ENCODE measurements at regions of chr1 and their contacts with region 1.

Region 1: GRCh38 chr1:26889551-26890466 is at the start of gene GPN2:
- DNase-seq: peak; percentile 52 to 87 (median 71)
- ATAC-seq: peak; percentile 93 to 98 (median 96)
- H3K4me3 ChIP-seq: peak within 1 kb of the TSS; percentile 80 to 93
- H3K4me3 Mint-ChIP-seq: peak within 1 kb of the TSS; percentile 88 to 96 (median 95)
- H3K27ac ChIP-seq: peak within 1 kb of the TSS; percentile 89
- H3K27ac Mint-ChIP-seq: peak within 1 kb of the TSS; percentile 93
- H3K4me1 ChIP-seq: peaks cover 7 to 28% of the 10 kb centered on the region in 2 experiments
- H3K4me1 Mint-ChIP-seq: peaks cover 32 to 39% (median 36%) of the 10 kb centered on the region in 3 donors
- H3K27me3 ChIP-seq: no peaks in the 10 kb centered on the region
- H3K27me3 Mint-ChIP-seq: no peaks in the 10 kb centered on the region
- total RNA-seq, gene GPN2: 30.8 to 35.7 (median 32.7) TPM

Region 2: GRCh38 chr1:26608895-26609294 is 280.9 kb before region 1 on chr1:
- CTCF ChIA-PET with region 1: interaction called in 1 of 2 experiments, 9 read pairs
- POLR2A ChIA-PET with region 1: interaction called in 1 of 2 experiments, 11 read pairs
- DNase-seq: no peak
- ATAC-seq: no peak
- H3K4me3 ChIP-seq: no peak overlapping the region
- H3K4me3 Mint-ChIP-seq: no peak overlapping the region
- H3K27ac ChIP-seq: no peak overlapping the region
- H3K27ac Mint-ChIP-seq: no peak overlapping the region
- H3K4me1 ChIP-seq: no peaks in the 10 kb centered on the region
- H3K4me1 Mint-ChIP-seq: no peaks in the 10 kb centered on the region
- H3K27me3 ChIP-seq: peaks cover 0 to 7% of the 10 kb centered on the region in 2 experiments
- H3K27me3 Mint-ChIP-seq: no peaks in the 10 kb centered on the region

Region 3: GRCh38 chr1:26666855-26667254 is 223.0 kb before region 1 on chr1:
- CTCF ChIA-PET with region 1: no interaction called
- POLR2A ChIA-PET with region 1: no interaction called
- DNase-seq: no peak
- ATAC-seq: no peak
- H3K4me3 ChIP-seq: no peak overlapping the region
- H3K4me3 Mint-ChIP-seq: no peak overlapping the region
- H3K27ac ChIP-seq: no peak overlapping the region
- H3K27ac Mint-ChIP-seq: no peak overlapping the region
- H3K4me1 ChIP-seq: no peaks in the 10 kb centered on the region
- H3K4me1 Mint-ChIP-seq: no peaks in the 10 kb centered on the region
- H3K27me3 ChIP-seq: no peaks in the 10 kb centered on the region
- H3K27me3 Mint-ChIP-seq: no peaks in the 10 kb centered on the region

Region 4: GRCh38 chr1:26705788-26706311 is 184.0 kb before region 1 on chr1:
- CTCF ChIA-PET with region 1: no interaction called
- POLR2A ChIA-PET with region 1: interaction called in 1 of 2 experiments, 12 read pairs
- DNase-seq: no peak
- ATAC-seq: no peak
- H3K4me3 ChIP-seq: peak overlapping the region in 1 of 2 donors; percentile 11
- H3K4me3 Mint-ChIP-seq: peak overlapping the region; percentile 45 to 64 (median 45)
- H3K27ac ChIP-seq: peak overlapping the region; percentile 10
- H3K27ac Mint-ChIP-seq: peak overlapping the region; percentile 41 to 73
- H3K4me1 ChIP-seq: peaks cover 57 to 70% of the 10 kb centered on the region in 2 experiments
- H3K4me1 Mint-ChIP-seq: peaks cover 20 to 47% (median 45%) of the 10 kb centered on the region in 3 donors
- H3K27me3 ChIP-seq: no peaks in the 10 kb centered on the region
- H3K27me3 Mint-ChIP-seq: no peaks in the 10 kb centered on the region

Region 5: GRCh38 chr1:26754086-26754874 is 135.5 kb before region 1 on chr1:
- CTCF ChIA-PET with region 1: no interaction called
- POLR2A ChIA-PET with region 1: interaction called in 1 of 2 experiments, 17 read pairs
- DNase-seq: no peak
- ATAC-seq: no peak
- H3K4me3 ChIP-seq: no peak overlapping the region
- H3K4me3 Mint-ChIP-seq: no peak overlapping the region
- H3K27ac ChIP-seq: no peak overlapping the region
- H3K27ac Mint-ChIP-seq: peak overlapping the region; percentile 34 to 43
- H3K4me1 ChIP-seq: peaks cover 5 to 37% of the 10 kb centered on the region in 2 experiments
- H3K4me1 Mint-ChIP-seq: peaks cover 53 to 70% (median 67%) of the 10 kb centered on the region in 3 donors
- H3K27me3 ChIP-seq: no peaks in the 10 kb centered on the region
- H3K27me3 Mint-ChIP-seq: no peaks in the 10 kb centered on the region

Region 6: DNA sequence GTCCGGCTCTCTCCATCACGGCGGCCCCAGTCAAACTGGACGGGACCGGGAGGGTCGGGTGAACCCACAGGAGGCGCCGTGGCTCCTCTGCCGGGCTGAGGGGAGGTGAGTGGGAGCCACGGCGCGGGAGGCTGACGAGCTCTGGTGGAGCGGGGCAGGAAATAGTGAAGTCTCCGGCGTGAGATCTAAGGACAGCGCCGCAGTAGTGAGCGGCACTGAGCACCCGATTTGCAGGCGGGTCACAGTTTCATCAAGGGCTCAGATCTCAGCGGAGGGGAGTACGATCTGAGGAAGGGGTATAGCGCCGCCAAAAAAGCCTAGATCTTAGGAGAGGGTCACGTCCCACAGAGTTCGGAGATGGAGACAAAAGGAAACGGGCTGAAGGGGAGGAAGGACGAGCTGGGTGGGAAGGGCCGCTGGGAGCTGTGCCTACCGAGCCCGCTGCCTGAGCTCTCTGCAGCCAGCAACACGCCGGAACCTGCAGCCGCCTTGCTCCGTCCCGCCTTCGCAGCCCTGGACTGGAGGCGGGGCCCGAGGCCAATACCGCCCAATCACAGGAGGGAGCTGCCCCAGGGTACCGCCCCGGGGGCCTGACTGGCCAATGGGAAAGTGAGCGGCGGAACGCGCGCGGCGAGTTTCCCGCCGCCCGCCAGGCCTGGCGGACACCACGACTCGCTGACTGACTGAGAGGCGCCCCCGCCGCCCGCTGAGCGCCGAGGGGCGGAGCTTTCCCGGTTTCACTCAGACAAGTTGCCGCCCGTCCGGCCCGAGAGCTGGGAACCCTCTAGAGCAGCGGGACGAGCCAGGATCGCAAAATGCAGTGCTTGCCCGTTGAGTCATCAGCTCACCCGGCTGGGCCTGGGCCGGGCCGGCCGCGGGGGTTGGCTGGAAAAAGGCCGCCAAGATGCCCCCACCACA is 24.9 kb before region 1 on chr1:
- CTCF ChIA-PET with region 1: interaction called, 5 to 13 read pairs
- POLR2A ChIA-PET with region 1: no interaction called
- DNase-seq: peak; percentile 82 to 96 (median 90)
- ATAC-seq: peak; percentile 94 to 96 (median 94)
- H3K4me3 ChIP-seq: peak overlapping the region; percentile 92 to 99
- H3K4me3 Mint-ChIP-seq: peak overlapping the region; percentile 87 to 95 (median 88)
- H3K27ac ChIP-seq: peak overlapping the region; percentile 72
- H3K27ac Mint-ChIP-seq: peak overlapping the region; percentile 88 to 93
- H3K4me1 ChIP-seq: peaks cover 3 to 32% of the 10 kb centered on the region in 2 experiments
- H3K4me1 Mint-ChIP-seq: peaks cover 17 to 31% (median 23%) of the 10 kb centered on the region in 3 donors
- H3K27me3 ChIP-seq: peaks cover 0 to 2% of the 10 kb centered on the region in 2 experiments
- H3K27me3 Mint-ChIP-seq: no peaks in the 10 kb centered on the region

Region 7: GRCh38 chr1:26900001-26900814 is 10.4 kb after region 1 on chr1 and contains the start of gene GPATCH3:
- CTCF ChIA-PET with region 1: interaction called in 1 of 2 experiments, 11 read pairs
- POLR2A ChIA-PET with region 1: interaction called, 8 to 13 read pairs
- DNase-seq: peak; percentile 71 to 94 (median 83)
- ATAC-seq: peak; percentile 92 to 96 (median 94)
- H3K4me3 ChIP-seq: peak within 1 kb of the TSS; percentile 70 to 92
- H3K4me3 Mint-ChIP-seq: peak within 1 kb of the TSS; percentile 95 to 97 (median 97)
- H3K27ac ChIP-seq: peak within 1 kb of the TSS; percentile 78
- H3K27ac Mint-ChIP-seq: peak within 1 kb of the TSS; percentile 99
- H3K4me1 ChIP-seq: peaks cover 15 to 21% of the 10 kb centered on the region in 2 experiments
- H3K4me1 Mint-ChIP-seq: peaks cover 27 to 41% (median 31%) of the 10 kb centered on the region in 3 donors
- H3K27me3 ChIP-seq: no peaks in the 10 kb centered on the region
- H3K27me3 Mint-ChIP-seq: no peaks in the 10 kb centered on the region
- total RNA-seq, gene GPATCH3: 23.6 to 28.6 (median 27.6) TPM

Region 8: DNA sequence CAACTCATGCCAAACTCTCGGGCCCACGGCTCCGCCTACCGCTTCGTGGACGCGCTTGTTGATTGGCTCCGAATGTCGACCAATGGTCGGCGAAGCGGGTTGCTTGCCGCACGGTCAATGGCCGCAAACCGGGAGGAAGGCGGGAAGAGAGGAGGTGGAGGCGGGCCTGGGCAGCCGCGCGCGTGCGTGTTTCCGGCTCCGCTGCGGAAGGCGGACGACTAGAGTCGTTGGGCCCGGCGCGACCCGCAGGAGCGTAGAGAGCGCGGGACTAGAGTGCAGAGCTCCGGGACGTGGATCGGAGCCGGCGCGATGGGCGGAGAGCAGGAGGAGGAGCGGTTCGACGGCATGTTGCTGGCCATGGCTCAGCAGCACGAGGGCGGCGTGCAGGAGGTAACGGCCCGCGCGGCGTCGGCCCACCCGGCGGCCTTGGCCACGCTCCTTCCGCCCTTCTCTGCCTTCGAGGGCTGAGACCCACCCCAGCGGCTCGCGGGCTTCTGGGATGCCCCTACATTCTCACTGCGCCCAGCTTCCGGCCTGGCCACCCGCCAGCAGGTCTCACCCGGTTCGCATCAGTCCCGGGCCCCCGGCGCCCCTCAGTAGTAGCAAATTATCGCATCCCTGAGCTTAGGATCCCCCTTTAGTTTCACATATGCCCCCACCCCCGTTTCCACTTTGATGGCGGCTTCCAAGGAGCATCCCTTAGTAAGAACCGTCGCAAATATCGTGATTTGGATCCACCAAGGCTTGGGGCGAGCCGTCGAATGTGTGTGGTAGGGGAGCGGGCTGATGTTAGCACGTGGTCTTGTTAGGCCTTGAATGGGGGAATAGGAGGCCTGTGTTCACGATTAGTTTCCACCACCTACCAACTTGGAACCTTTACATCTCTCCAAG is 32.0 kb after region 1 on chr1 and contains the start of gene NUDC:
- CTCF ChIA-PET with region 1: no interaction called
- POLR2A ChIA-PET with region 1: interaction called in 1 of 2 experiments, 13 read pairs
- DNase-seq: peak; percentile 84 to 97 (median 95)
- ATAC-seq: peak; percentile 94 to 98 (median 97)
- H3K4me3 ChIP-seq: peak within 1 kb of the TSS; percentile 80 to 89
- H3K4me3 Mint-ChIP-seq: peak within 1 kb of the TSS; percentile 90 to 98 (median 92)
- H3K27ac ChIP-seq: peak within 1 kb of the TSS; percentile 87
- H3K27ac Mint-ChIP-seq: peak within 1 kb of the TSS; percentile 80 to 95
- H3K4me1 ChIP-seq: peaks cover 10 to 28% of the 10 kb centered on the region in 2 experiments
- H3K4me1 Mint-ChIP-seq: peaks cover 36 to 41% (median 37%) of the 10 kb centered on the region in 3 donors
- H3K27me3 ChIP-seq: no peaks in the 10 kb centered on the region
- H3K27me3 Mint-ChIP-seq: no peaks in the 10 kb centered on the region
- total RNA-seq, gene NUDC: 39.1 to 45.7 (median 43.2) TPM

Region 9: DNA sequence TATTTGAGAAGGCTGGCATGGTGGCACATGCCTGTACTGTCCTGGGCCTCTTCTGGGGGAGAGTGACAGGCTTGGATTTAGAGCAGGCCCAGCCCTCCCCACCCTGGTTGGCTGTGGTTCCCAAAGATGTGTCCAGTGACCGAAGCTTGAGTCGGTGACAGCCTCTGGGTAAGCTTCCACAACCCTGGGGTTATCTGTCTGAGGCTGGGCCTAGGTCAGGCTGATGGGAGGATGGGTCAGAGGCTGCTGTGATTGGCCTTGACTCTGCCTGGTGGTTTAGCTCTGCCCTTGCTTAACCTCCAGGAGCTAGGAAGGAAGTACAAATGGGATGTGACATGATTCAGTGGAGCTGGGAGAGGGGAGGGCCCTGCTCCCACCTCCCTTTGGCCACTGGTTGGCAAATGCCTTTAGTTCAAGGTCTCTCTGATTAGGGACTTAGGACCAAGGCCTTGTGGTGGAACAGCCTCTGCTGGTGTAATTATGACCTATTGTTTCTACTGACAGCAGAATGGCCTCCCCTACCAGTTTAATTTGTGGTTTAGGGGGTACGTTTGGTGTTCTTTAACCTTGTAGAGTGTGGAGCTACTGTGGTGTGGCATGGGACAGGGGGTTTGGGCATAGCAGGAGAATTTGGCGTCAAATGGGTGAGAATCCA is 48.3 kb after region 1 on chr1:
- CTCF ChIA-PET with region 1: no interaction called
- POLR2A ChIA-PET with region 1: no interaction called
- DNase-seq: no peak
- ATAC-seq: no peak
- H3K4me3 ChIP-seq: no peak overlapping the region
- H3K4me3 Mint-ChIP-seq: no peak overlapping the region
- H3K27ac ChIP-seq: no peak overlapping the region
- H3K27ac Mint-ChIP-seq: no peak overlapping the region
- H3K4me1 ChIP-seq: peaks cover 0 to 3% of the 10 kb centered on the region in 2 experiments
- H3K4me1 Mint-ChIP-seq: peaks cover 0 to 3% (median 1%) of the 10 kb centered on the region in 3 donors
- H3K27me3 ChIP-seq: no peaks in the 10 kb centered on the region
- H3K27me3 Mint-ChIP-seq: no peaks in the 10 kb centered on the region